Body of pancreas (tissue), 4 donors: ENCODE measurements at regions of chr4 and their contacts with region 1.

Region 1: DNA sequence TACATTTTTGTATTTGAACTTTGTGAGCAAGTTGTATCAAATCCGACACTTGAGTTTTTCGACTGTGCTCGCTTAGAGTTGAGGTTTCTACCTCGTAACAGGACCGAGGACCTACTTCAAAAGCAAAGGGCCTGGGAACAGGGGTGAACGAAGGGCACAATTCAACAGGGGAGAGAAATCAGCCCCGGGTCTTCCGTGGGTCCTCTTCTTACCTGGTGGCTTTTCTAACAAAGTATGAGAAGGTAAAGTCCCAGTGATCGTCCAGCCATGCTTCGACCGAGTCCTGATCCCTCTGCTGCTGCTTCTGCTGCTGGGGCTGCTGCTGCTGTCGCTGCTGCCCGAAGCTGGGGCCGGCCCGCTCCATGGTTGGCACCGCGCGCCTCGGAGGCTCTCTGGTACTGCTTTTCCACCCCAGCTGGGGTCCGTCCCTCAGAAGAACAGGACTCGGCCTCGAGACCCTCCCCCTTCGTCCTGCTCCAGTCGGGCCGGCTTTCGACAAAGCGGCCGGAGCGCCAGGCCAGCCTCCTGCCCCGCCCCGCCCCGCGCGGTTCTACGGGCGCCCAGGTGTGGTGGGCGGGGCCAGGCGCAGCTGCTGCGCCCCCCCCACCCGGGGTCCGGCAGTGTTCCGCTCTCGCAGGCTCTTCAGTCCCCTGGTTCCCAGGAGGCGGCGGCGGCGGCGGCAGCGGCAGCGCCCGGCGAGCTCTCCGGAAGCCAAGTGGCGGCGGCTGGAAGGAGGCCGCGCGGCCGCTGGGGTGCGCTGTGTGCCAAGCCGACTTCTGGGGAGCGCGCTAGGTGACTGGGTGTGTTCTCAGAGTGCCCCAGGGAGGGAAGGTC is at the start of gene PDE5A:
- DNase-seq: peak; percentile 87 to 92 (median 90)
- ATAC-seq: peak; percentile 88
- H3K4me3 ChIP-seq: peak within 1 kb of the TSS; percentile 74 to 83
- H3K27ac ChIP-seq: peak within 1 kb of the TSS; percentile 78 to 88 (median 82)
- H3K4me1 ChIP-seq: peaks cover 9% of the 10 kb centered on the region
- H3K27me3 ChIP-seq: no peaks in the 10 kb centered on the region
- CTCF ChIP-seq: peak; percentile 78 to 98 (median 88)
- POLR2A ChIP-seq: peak; percentile 61 to 79 (median 78)
- total RNA-seq, gene PDE5A: 12.5 to 31.9 TPM

Region 2: DNA sequence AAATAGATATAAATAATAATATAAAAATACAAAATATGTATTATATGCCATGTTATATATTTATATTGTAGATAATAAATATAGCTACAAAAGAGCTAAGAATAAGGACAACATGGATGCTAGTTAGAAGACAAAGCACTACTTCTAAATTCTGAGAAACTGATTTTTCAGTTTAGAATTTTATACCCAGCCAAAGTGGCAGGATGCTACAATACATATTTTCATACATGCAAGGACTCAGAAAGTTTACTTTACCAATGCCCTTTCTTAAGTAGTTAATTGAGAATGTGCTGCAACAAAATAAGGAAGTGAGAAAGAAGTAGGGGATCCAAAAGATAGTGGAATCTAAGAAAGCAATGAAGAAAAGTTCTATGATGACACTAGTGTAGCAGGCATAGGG is 64.4 kb before region 1 on chr4:
- intact Hi-C with region 1: loop called (anchors 10 kb)
- DNase-seq: no peak
- ATAC-seq: no peak
- H3K4me3 ChIP-seq: no peak overlapping the region
- H3K27ac ChIP-seq: no peak overlapping the region
- H3K4me1 ChIP-seq: no peaks in the 10 kb centered on the region
- H3K27me3 ChIP-seq: no peaks in the 10 kb centered on the region
- CTCF ChIP-seq: no peak
- POLR2A ChIP-seq: no peak

Region 3: DNA sequence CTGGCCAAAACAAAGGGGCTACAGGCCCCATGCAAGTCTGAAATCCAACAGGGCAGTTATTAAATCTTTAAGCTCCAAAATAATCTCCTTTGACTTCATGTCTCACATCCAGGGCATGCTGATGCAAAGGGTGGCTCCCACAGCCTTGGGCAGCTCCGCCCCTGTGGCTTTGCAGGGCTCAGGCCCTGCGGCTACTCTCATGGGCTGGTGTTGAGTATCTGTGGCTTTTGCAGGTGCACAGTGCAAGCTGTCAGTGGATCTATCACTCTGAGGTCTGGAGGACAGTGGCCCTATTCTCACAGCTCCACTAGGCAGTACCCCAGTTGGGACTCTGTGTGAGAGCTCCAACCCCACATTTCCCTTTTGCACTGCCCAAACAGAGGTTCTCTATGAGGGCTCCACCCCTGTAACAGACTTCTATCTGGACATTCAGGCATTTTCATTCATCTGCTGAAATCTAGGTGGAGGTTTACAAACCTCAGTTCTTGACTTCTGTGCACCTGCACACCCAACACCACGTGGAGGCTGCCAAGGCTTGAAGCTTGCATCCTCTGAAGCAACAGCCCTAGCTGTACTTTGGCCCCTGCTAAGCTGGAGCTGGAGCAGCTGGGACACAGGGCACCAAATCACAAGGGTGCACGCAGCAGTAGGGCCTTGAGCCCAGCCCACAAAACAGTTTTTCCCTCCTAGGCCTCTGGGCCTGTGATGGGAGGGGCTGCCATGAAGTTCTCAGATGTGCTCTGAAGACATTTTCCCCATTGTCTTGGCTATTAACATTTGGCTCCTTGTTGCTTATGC is 154.9 kb after region 1 on chr4:
- intact Hi-C with region 1: loop called (anchors 5 kb)
- DNase-seq: no peak
- ATAC-seq: no peak
- H3K4me3 ChIP-seq: no peak overlapping the region
- H3K27ac ChIP-seq: no peak overlapping the region
- H3K4me1 ChIP-seq: no peaks in the 10 kb centered on the region
- H3K27me3 ChIP-seq: no peaks in the 10 kb centered on the region
- CTCF ChIP-seq: no peak
- POLR2A ChIP-seq: no peak

Region 4: DNA sequence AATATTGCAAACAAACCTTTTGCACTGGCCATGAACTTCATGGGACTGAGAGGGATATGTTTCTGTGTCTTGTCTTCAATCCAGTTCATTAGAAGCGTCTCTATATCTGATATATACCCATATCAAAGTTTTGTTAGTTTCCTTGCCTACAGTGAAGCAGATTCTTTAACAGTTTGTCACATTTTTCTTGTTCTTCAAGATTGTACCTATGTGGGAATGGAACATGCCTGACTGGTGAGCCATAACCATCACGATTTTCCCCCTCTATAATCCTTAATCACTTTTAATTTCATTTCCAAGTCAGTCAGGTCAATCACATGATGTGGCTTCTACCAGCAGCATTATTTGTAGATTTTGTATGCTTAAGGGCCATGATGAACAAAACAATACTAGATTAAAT is 197.2 kb after region 1 on chr4:
- intact Hi-C with region 1: no loop called
- DNase-seq: no peak
- ATAC-seq: no peak
- H3K4me3 ChIP-seq: no peak overlapping the region
- H3K27ac ChIP-seq: no peak overlapping the region
- H3K4me1 ChIP-seq: no peaks in the 10 kb centered on the region
- H3K27me3 ChIP-seq: no peaks in the 10 kb centered on the region
- CTCF ChIP-seq: no peak
- POLR2A ChIP-seq: no peak

Region 5: GRCh38 chr4:120049732-120050494 is 421.4 kb after region 1 on chr4:
- intact Hi-C with region 1: loop called (anchors 10 kb)
- DNase-seq: peak; percentile 86 to 90 (median 88)
- ATAC-seq: peak; percentile 97
- H3K4me3 ChIP-seq: no peak overlapping the region
- H3K27ac ChIP-seq: no peak overlapping the region
- H3K4me1 ChIP-seq: no peaks in the 10 kb centered on the region
- H3K27me3 ChIP-seq: no peaks in the 10 kb centered on the region
- CTCF ChIP-seq: peak; percentile 64 to 87 (median 84)
- POLR2A ChIP-seq: no peak

Region 6: DNA sequence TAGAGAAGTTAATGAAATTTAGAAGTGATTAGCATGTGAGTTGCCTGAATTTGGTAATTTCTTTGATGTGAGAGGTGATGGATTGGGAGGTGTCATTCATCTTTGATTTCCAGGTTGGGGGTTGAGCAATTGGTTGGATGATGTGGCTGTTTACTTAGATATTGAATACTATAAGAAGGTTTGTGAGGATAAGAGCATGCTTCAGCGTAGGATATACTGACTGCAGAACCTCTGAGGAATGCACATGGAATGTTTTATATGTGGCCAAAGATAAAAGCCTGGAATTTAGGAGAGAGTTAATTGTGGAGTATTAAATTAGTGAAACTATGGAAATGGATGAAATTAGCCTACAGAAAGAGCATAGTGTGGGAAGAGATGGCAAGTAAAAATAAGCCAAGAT is 603.5 kb after region 1 on chr4:
- intact Hi-C with region 1: no loop called
- DNase-seq: no peak
- ATAC-seq: no peak
- H3K4me3 ChIP-seq: no peak overlapping the region
- H3K27ac ChIP-seq: no peak overlapping the region
- H3K4me1 ChIP-seq: peaks cover 5% of the 10 kb centered on the region
- H3K27me3 ChIP-seq: no peaks in the 10 kb centered on the region
- CTCF ChIP-seq: no peak
- POLR2A ChIP-seq: no peak